OCI-LY7 (cell line): ENCODE measurements at regions of chr2 and their contacts with region 1.

Region 1: DNA sequence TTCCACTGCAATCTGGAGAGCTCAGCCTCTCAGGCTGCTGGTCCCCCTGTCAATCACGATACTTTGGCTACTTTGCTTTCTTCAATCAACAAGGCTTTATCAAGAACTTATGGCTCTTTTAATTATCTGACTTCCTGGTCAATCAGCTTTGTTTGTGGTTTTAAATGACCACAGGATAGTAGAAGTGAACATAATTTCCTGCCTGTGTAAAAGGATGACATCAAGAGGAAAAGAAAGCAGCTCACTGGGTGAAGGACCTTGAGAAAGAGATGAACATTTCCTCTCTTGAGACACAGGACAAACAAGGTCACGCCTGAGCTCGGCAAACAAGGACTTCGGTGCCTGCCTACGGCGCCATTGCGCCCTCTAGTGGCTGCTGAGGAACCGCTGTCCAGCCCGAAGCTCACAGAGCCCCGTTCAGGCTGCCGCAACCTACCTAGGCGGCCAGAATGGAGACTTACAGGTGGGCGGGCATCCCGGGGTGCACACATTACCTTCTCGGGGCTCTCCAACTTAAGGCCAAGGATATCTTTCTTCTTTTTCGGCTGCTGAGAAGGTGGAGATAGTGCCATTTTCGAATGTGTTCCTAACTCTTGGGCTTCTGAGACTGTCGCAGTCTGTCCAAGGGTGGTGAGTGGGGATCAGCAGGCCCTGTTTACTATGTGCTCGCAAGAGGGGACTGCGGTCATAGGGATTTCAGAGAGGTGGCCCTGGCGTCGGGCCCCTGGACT is 54.0 kb downstream of the IL1RL2 start:
- DNase-seq: peak; percentile 82
- H3K4me3 ChIP-seq: no peak overlapping the region
- H3K27ac ChIP-seq: no peak overlapping the region
- H3K4me1 ChIP-seq: peaks cover 5% of the 10 kb centered on the region
- CTCF ChIP-seq: peak; percentile 96

Region 2: DNA sequence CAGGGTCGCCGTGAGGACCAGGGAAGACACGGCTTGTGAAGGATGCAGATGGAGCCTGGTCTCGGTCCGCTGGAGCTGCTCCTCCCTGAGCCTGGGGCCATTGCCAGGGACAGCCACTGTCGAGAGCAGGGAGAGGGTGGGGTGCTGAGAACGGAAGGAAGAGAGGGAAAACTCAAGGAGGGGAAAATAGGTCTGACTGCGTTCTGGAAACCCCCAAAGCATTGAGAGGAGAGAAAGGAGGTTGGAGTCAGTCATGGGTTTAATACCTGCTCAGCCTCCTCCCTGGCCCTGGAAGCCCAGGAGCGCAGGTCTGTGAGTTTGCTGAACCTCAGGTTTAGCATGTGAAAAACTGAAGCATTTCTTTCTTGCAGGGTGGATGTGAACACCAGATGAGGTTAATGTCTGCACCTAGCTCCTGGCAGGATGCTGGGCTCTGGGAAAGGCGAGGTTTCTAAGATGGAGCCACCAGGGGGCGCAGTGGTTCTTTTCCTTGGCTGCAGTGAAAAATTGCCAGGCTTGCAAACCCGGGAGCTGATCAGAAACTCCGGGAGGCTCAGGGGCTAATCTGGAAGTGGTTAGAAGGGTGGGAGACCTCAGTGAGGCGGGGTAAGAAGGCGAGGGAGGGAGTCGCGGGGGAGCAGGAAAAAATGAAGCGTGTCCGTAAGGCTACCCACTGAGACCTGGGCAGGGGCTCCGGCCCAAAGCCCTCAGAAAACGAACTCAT is 898.7 kb before region 1 on chr2:
- CTCF ChIA-PET with region 1: no interaction called
- POLR2A ChIA-PET with region 1: no interaction called
- intact Hi-C with region 1: loop called (anchors 5 kb)
- DNase-seq: peak; percentile 57
- H3K4me3 ChIP-seq: no peak overlapping the region
- H3K27ac ChIP-seq: no peak overlapping the region
- H3K4me1 ChIP-seq: no peaks in the 10 kb centered on the region
- CTCF ChIP-seq: peak; percentile 92

Region 3: DNA sequence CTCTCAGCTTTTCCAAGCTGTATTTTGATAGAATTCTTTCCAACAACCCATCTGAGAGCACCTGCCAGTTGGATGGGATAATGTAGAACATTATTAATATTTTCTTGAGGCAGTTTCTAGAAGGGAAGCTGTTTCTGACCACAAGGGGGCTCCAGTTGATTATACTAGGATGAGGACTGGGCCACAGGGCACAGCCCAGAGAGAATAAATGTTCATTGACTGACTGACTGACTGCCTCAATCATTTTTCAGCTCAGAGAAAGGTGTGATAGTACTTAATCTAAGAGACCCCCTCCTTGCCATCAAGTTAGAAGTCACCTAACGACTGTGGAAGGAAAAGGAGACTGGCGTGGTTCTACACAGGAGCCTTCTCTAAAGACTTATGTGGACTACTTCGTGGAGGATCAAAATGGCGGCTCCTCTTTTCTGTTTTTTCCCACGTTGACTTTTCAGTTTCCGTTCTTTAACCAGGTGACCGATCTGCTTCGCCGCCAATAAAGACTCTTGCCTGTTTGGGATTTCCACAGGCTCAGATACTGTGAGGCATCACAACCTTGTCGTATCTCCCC is 821.6 kb before region 1 on chr2:
- CTCF ChIA-PET with region 1: no interaction called
- POLR2A ChIA-PET with region 1: no interaction called
- intact Hi-C with region 1: loop called (anchors 1 kb)
- DNase-seq: peak; percentile 67
- H3K4me3 ChIP-seq: no peak overlapping the region
- H3K27ac ChIP-seq: no peak overlapping the region
- H3K4me1 ChIP-seq: no peaks in the 10 kb centered on the region
- CTCF ChIP-seq: peak; percentile 89

Region 4: DNA sequence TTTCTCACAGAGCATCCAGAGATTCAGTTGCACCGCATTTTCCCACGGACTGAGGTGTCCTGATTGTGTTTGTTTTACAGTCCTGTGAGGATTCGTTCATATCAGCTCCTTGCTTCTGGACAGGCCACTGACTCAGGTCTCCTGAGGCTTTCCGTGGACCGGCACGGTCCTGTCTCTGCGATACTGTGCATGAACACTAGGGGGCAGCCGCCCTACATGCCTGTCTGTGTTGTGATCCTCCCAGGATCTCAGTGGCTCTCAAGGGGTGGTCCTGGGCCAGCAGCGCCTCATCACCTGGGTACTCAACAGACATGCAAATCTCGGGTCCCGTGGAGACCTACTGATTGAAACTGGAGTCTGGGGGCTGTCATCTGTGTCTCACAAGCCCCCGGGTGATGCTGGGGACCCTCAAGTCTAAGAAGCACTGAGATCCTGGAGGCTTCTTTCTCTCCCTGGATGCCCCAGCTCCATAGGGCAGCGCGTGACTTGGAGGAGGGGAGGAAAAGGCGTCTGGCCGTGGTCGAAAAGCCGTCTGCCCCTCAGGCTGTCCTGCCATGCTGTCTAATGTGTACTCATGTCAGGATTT is 220.1 kb before region 1 on chr2:
- CTCF ChIA-PET with region 1: interaction called, 4 read pairs
- POLR2A ChIA-PET with region 1: interaction called, 3 read pairs
- intact Hi-C with region 1: loop called (anchors 1 kb)
- DNase-seq: peak; percentile 63
- H3K4me3 ChIP-seq: no peak overlapping the region
- H3K27ac ChIP-seq: no peak overlapping the region
- H3K4me1 ChIP-seq: no peaks in the 10 kb centered on the region
- CTCF ChIP-seq: peak; percentile 94

Region 5: DNA sequence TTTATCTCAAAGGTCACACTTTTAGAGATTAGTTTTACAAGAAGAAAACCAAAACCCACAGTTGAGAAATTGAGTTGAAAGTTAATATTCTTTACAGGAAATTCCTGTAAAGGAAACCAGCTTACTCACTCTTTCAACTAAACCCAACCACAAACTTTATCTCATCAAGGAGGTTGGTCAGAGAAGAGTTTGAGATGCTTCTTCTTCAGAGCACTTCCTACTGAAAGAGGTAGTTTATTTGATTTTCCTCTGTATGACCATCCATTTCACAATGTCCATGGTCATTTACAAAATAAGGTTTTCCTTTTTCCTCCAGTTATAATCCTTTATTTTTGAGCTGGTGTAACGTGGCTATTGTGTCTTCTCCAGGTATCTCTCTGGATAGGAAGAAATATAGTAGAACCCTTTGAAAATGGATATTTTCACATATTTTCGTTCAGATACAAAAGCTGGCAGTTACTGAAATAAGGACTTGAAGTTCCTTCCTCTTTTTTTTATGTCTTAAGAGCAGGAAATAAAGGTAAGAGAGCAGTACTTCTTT is 177.7 kb after region 1 on chr2:
- CTCF ChIA-PET with region 1: no interaction called
- POLR2A ChIA-PET with region 1: no interaction called
- intact Hi-C with region 1: no loop called
- DNase-seq: no peak
- H3K4me3 ChIP-seq: no peak overlapping the region
- H3K27ac ChIP-seq: no peak overlapping the region
- H3K4me1 ChIP-seq: no peaks in the 10 kb centered on the region
- CTCF ChIP-seq: no peak